Panc1 (cell line): ENCODE measurements at regions of chr14 and their contacts with region 1.

Region 1: GRCh38 chr14:26173646-26174045 is 424.2 kb downstream of the NOVA1 start:
- DNase-seq: no peak
- ATAC-seq: no peak
- H3K4me3 ChIP-seq: no peak overlapping the region
- H3K27ac ChIP-seq: no peak overlapping the region
- H3K4me1 ChIP-seq: no peaks in the 10 kb centered on the region
- H3K27me3 ChIP-seq: no peaks in the 10 kb centered on the region
- CTCF ChIP-seq: no peak

Region 2: DNA sequence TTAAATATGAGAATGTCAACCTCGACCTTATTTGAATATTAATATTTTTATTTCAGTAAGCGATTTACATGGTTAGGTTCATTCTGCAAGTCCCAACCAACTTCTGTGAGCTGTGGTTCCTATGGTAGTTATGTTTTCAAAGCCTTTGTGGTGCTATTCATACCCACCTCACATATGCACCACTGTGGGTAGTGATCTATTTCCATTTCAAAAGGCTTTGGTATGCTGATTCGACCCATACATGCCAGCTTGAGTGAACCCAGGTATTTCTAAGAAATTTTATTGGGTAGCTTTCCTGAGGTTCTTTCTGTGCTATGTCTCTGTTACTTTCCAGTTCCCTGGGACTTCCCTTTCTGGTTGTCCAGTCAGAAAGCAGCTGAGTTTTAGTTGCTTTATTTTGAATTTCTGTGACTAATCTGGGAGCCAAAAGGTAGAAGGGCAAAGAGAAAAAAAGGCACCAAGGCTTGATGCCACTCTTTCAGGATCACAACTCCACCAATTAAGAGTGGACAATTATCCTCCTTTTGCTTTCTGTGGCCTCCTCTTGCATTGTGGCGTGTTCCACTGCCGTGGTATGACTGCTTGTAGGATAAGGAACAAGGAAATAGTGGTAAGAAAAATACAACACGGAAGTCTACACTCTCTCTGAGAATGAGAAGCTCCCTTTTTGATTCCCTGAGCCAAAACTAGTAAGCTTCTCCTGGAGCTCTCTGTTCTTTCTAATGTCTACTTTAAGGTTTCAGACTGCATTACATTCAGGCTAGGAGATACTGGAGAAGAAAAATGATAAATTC is 304.9 kb before region 1 on chr14:
- CTCF ChIA-PET with region 1: no interaction called
- POLR2A ChIA-PET with region 1: no interaction called
- in situ Hi-C with region 1: no loop called
- intact Hi-C with region 1: no loop called
- DNase-seq: no peak
- ATAC-seq: no peak
- H3K4me3 ChIP-seq: no peak overlapping the region
- H3K27ac ChIP-seq: no peak overlapping the region
- H3K4me1 ChIP-seq: no peaks in the 10 kb centered on the region
- H3K27me3 ChIP-seq: no peaks in the 10 kb centered on the region
- CTCF ChIP-seq: no peak

Region 3: DNA sequence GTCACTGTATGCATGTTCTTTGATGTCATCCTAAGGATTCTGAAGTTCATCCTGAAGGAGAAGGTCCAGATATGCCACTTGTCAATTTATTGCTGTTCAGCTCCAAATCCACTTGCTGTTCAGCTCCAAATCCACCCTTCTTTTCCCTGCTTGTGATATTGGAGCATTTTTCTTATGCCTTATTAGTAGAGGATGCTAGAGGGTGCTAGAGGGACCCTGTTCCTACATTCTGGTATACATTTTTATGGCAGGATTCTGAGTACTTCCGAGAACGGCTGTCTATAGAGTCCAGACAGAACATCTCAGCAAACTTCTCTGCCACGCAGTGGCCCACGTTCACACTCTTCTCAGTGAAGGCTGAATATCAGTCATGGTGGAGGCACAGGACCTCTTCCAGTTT is 17.5 kb after region 1 on chr14:
- CTCF ChIA-PET with region 1: no interaction called
- POLR2A ChIA-PET with region 1: interaction called, 20 read pairs
- in situ Hi-C with region 1: no loop called
- intact Hi-C with region 1: no loop called
- DNase-seq: no peak
- ATAC-seq: no peak
- H3K4me3 ChIP-seq: no peak overlapping the region
- H3K27ac ChIP-seq: no peak overlapping the region
- H3K4me1 ChIP-seq: no peaks in the 10 kb centered on the region
- H3K27me3 ChIP-seq: no peaks in the 10 kb centered on the region
- CTCF ChIP-seq: no peak

Region 4: GRCh38 chr14:26261368-26262122 is 87.9 kb after region 1 on chr14:
- CTCF ChIA-PET with region 1: no interaction called
- POLR2A ChIA-PET with region 1: no interaction called
- in situ Hi-C with region 1: no loop called
- intact Hi-C with region 1: no loop called
- DNase-seq: no peak
- ATAC-seq: no peak
- H3K4me3 ChIP-seq: no peak overlapping the region
- H3K27ac ChIP-seq: no peak overlapping the region
- H3K4me1 ChIP-seq: no peaks in the 10 kb centered on the region
- H3K27me3 ChIP-seq: no peaks in the 10 kb centered on the region
- CTCF ChIP-seq: no peak